Esophagus muscularis mucosa (tissue), 4 donors: ENCODE measurements at regions of chr6 and their contacts with region 1.

Region 1: DNA sequence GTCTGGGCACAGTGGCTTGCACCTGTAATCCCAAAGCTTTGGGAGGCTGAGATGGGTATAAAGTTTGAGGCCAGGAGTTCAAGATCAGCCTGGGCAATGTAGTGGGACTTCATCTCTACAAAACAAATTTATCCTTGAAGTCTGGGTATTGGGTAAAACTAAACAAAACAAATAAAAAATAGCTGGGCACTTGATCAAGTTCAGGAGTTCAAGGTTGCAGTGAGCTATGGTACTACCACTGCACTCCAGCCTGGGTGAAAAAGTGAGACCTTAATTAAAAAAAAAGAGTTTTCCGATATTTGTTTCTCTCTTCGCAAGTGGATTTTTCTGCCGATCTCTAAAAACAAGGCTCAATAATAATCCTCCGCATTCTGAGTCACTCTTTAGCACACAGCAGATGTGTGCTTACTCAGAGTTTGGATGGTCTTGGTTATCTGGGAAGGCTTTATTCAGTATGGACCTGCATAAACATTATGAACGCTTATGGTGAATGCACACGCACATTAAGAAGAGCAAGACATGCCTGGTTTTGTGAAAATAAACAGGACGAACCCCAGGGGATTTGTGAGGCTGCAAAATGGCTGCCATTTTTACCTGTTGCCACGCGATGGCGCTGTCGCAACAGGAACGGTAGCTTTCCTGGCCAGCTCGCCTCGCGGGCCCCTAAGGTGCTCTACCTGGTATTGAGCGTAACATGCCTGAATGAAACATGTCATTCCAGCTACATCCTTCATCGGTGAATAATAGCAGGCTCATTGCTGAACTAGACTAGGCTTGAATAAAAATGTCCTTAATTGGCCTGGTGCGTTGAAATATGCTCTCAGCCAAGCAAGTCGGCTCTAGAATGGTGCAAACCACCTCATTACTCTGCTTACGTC is 6.0 kb downstream of the OPN5 start:
- DNase-seq: no peak
- H3K4me3 ChIP-seq: peak overlapping the region in 2 of 4 donors; percentile 15 to 35
- H3K27ac ChIP-seq: no peak overlapping the region
- H3K4me1 ChIP-seq: peaks cover 6 to 7% (median 7%) of the 10 kb centered on the region in 4 donors
- H3K27me3 ChIP-seq: peaks cover 0 to 5% (median 0%) of the 10 kb centered on the region in 4 donors
- CTCF ChIP-seq: peak; percentile 58 to 85 (median 74)
- EP300 ChIP-seq: no peak
- POLR2A ChIP-seq: no peak

Region 2: DNA sequence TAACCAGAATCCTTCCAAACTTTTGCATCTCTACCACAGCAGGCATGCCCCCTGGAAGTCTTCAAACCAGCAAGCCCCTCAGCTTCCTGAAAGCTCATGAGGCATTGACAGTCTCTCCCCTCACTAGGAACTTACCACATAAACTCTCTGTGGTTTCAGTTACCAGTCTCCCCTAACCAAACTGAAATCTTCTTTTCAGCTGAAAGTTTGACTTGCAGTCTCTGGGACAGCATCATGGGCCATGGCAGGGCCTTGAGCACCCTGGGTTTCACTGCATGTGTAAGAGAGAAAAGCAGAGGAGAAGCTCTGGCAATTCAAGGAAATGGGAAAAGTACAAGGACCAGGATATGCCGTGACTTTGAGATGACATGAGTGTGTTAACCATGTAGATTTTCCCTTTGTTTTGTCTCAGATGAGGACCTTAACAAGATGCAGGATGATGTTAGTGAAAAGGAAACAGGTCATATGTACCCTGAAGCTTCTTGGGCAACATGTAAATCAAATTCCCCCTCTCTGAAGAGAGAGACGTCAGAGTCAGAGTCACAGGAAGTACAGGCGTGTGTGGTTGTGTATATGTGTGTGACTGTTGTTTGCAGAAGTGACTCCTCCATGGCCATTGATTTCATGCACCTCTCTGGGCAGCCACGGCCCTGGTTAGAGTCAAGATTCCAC is 584.5 kb before region 1 on chr6:
- intact Hi-C with region 1: no loop called
- DNase-seq: no peak
- H3K4me3 ChIP-seq: no peak overlapping the region
- H3K27ac ChIP-seq: no peak overlapping the region
- H3K4me1 ChIP-seq: no peaks in the 10 kb centered on the region
- H3K27me3 ChIP-seq: no peaks in the 10 kb centered on the region
- CTCF ChIP-seq: no peak
- EP300 ChIP-seq: no peak
- POLR2A ChIP-seq: no peak

Region 3: DNA sequence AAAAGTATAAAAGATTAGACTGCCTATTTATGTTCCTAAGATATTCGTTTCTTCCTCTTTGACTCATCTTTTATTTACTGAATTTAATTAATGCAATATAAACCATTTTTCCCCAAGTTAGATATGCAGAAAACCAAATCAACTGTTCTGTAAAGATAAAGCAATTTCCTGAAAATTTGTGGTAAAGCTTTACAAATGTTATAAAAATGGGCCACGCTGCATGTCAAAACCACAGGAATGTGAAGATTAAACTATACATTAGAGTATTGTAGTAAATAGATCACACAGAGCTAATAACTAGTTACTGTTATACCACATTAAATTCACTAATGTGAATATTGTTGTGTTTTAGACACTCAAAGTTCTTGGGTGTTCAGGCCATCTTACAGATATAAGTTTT is 77.3 kb after region 1 on chr6:
- intact Hi-C with region 1: no loop called
- DNase-seq: no peak
- H3K4me3 ChIP-seq: no peak overlapping the region
- H3K27ac ChIP-seq: no peak overlapping the region
- H3K4me1 ChIP-seq: no peaks in the 10 kb centered on the region
- H3K27me3 ChIP-seq: no peaks in the 10 kb centered on the region
- CTCF ChIP-seq: no peak
- EP300 ChIP-seq: no peak
- POLR2A ChIP-seq: no peak

Region 4: GRCh38 chr6:48764286-48764685 is 976.4 kb after region 1 on chr6:
- intact Hi-C with region 1: loop called (anchors 5 kb)
- DNase-seq: no peak
- H3K4me3 ChIP-seq: no peak overlapping the region
- H3K27ac ChIP-seq: no peak overlapping the region
- H3K4me1 ChIP-seq: no peaks in the 10 kb centered on the region
- H3K27me3 ChIP-seq: no peaks in the 10 kb centered on the region
- CTCF ChIP-seq: no peak
- EP300 ChIP-seq: no peak
- POLR2A ChIP-seq: no peak

Region 5: DNA sequence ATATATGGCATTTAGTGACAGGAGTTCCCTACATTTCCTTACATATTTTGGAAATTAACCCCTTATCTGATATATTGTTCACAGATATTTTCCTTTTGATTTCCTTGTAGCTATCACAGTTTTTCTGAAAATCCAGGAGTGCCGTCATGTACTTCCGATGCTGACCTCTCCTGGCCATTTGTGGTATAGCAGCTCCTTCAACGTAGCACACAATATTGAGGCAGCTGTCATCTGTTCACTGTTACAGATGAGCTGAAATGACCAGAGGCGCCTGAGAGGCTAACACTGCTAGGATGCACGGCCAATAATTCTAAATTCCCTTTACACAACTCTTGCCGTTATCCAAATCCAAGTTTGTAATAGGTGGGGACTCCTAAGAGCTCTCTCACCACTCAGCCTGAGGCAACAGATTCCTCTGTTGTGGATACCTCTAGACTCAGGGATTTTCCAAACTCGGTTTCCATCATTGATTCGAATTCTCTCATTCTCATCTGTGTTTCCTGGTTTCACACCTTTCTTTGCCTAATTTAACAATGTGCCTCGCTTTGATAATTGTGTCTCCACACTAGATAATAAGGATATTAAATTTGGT is 1622.2 kb after region 1 on chr6:
- intact Hi-C with region 1: loop called (anchors 10 kb)
- DNase-seq: no peak
- H3K4me3 ChIP-seq: no peak overlapping the region
- H3K27ac ChIP-seq: no peak overlapping the region
- H3K4me1 ChIP-seq: peaks cover 0 to 3% (median 0%) of the 10 kb centered on the region in 4 donors
- H3K27me3 ChIP-seq: no peaks in the 10 kb centered on the region
- CTCF ChIP-seq: peak; percentile 66 to 89 (median 71)
- EP300 ChIP-seq: no peak
- POLR2A ChIP-seq: no peak